ENCODE measurements at regions of chr1 and their contacts with region 1.

Region 1: GRCh38 chr1:152141974-152142584 is 16.9 kb downstream of the RPTN start:
- DNase-seq: peak; percentile 38 to 78
- ATAC-seq: peak; percentile 92 to 94
- H3K4me3 ChIP-seq: no peak overlapping the region
- H3K27ac ChIP-seq: no peak overlapping the region
- H3K4me1 ChIP-seq: no peaks in the 10 kb centered on the region
- CTCF ChIP-seq: peak; percentile 98
- EP300 ChIP-seq: no peak
- POLR2A ChIP-seq: no peak
- RAD21 ChIP-seq: peak; percentile 96 to 97

Region 2: DNA sequence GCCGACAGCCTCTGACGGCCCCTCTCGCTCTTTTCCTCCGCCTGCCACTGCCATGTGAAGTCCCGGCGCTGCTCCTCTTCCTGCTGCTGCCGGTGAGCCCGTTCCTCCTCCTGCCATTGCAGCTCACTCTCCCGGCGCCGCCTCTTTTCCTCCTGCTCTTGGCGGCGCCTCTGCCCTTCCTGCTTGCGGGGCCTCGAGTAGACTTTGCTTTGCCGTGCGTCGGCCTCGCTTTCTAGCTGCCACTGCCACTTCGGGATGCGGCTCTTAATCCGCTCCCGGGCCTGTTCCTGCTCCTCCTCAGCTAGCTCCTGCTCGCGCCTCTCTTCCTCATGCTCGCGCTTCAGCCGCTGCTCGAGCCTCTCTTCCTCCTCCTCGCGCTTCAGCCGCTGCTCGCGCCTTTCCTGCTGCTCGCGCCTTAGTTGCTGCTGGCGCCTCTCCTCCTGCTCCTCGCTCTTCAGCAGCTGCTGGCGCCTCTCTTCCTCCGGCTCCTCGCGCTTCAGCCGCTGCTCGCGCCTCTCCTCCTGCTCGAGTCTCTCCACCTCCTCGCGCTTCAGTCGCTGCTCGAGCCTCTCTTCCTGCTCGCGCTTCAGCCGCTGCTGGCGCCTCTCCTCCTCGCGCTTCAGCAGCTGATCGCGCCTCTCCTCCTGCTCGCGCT is 31.1 kb before region 1 on chr1:
- CTCF ChIA-PET with region 1: interaction called, 17 read pairs
- POLR2A ChIA-PET with region 1: interaction called, 3 read pairs
- DNase-seq: peak; percentile 24 to 72
- ATAC-seq: peak; percentile 45 to 72
- H3K4me3 ChIP-seq: peak overlapping the region; percentile 49
- H3K27ac ChIP-seq: peak overlapping the region in 1 of 2 experiments; percentile 67; a peak in 3 of 6 replicates
- H3K4me1 ChIP-seq: peaks cover 28% of the 10 kb centered on the region
- CTCF ChIP-seq: no peak
- EP300 ChIP-seq: no peak
- POLR2A ChIP-seq: no peak
- RAD21 ChIP-seq: no peak

Region 3: DNA sequence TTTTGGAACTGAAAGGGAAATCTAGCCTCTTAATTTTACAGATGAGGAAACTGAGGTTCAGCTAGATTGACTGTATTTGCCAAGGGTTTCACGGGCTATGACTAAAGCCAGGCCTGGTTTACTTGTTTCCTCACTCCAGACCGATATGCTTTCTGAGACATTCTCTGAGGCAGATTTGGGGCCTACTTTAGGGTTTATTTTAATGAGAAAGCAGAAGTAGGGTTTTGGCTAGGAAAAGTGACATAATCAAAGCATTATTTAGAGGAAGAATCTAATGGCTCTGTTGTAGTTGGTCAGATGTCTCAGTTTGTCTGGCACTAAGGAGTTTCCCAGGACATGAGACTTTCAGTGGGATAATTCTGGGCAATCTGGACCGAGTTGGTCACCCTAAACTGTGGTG is 18.5 kb after region 1 on chr1:
- CTCF ChIA-PET with region 1: interaction called, 12 read pairs
- POLR2A ChIA-PET with region 1: no interaction called
- DNase-seq: no peak
- ATAC-seq: no peak
- H3K4me3 ChIP-seq: no peak overlapping the region
- H3K27ac ChIP-seq: no peak overlapping the region
- H3K4me1 ChIP-seq: peaks cover 18% of the 10 kb centered on the region
- CTCF ChIP-seq: no peak
- EP300 ChIP-seq: no peak
- POLR2A ChIP-seq: no peak
- RAD21 ChIP-seq: no peak

Region 4: DNA sequence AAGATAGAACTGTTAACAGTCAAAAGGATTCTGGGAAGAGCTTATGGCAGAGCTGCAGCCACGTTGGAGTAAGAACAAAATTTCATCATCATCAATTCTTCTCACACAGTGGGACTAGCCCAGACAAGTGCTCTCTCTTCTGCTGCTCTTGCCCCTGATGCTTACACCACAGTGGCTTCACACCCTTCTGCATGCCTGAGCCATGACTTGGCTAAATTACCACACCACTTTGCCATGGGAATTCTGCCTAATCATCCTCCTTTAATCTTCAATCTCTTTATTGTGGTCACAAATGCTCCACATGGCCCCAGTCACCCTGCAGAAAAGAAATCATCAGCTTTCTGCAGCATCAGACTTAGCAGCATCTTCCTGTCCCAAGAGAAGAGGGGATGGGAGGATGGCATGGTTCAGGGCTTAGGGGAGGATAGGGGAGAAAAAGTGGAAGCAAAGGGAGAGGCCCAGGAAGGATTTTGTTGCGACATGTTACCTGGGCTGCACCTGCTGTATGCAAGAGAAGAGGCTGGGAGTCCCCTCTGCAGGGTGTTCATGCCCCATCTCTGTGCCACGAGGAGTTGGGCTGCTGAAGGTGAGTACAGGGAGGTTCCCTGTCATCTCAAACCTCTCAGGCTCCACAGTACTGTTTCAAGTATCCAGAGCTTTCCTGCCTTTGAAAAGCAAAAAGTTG is 25.9 kb after region 1 on chr1:
- CTCF ChIA-PET with region 1: interaction called, 357 read pairs
- POLR2A ChIA-PET with region 1: interaction called, 3 read pairs
- DNase-seq: peak in 1 of 2 experiments; percentile 80
- ATAC-seq: peak; percentile 65 to 76; a peak in 5 of 6 replicates
- H3K4me3 ChIP-seq: no peak overlapping the region
- H3K27ac ChIP-seq: peak overlapping the region; percentile 80 to 84
- H3K4me1 ChIP-seq: peaks cover 38% of the 10 kb centered on the region
- CTCF ChIP-seq: no peak
- EP300 ChIP-seq: peak; percentile 65 to 69; a peak in 4 of 5 replicates
- POLR2A ChIP-seq: no peak
- RAD21 ChIP-seq: no peak